ENCODE measurements at regions of chr17 and their contacts with region 1.

Region 1: GRCh38 chr17:17445925-17446665 is 30.7 kb upstream of the MED9 start:
- DNase-seq: peak; percentile 78 to 87 (median 85)
- ATAC-seq: peak; percentile 73 to 86 (median 82)
- H3K4me3 ChIP-seq: no peak overlapping the region
- H3K27ac ChIP-seq: peak overlapping the region; percentile 80 to 97 (median 91)
- H3K4me1 ChIP-seq: peaks cover 0 to 42% (median 19%) of the 10 kb centered on the region in 4 donors
- H3K27me3 ChIP-seq: no peaks in the 10 kb centered on the region
- CTCF ChIP-seq: no peak
- POLR2A ChIP-seq: no peak

Region 2: GRCh38 chr17:17258998-17259397 is 187.1 kb before region 1 on chr17:
- intact Hi-C with region 1: no loop called
- DNase-seq: peak in 1 of 3 donors; percentile 25
- ATAC-seq: no peak
- H3K4me3 ChIP-seq: no peak overlapping the region
- H3K27ac ChIP-seq: no peak overlapping the region
- H3K4me1 ChIP-seq: no peaks in the 10 kb centered on the region
- H3K27me3 ChIP-seq: no peaks in the 10 kb centered on the region
- CTCF ChIP-seq: no peak
- POLR2A ChIP-seq: no peak

Region 3: GRCh38 chr17:17408236-17408794 is 37.8 kb before region 1 on chr17:
- intact Hi-C with region 1: loop called in 1 of 2 experiments (anchors 5 kb)
- DNase-seq: peak in 1 of 3 donors; percentile 48
- ATAC-seq: peak in 3 of 4 donors; percentile 31 to 60 (median 58)
- H3K4me3 ChIP-seq: no peak overlapping the region
- H3K27ac ChIP-seq: peak overlapping the region; percentile 37 to 80 (median 73)
- H3K4me1 ChIP-seq: peaks cover 0 to 33% (median 5%) of the 10 kb centered on the region in 4 donors
- H3K27me3 ChIP-seq: no peaks in the 10 kb centered on the region
- CTCF ChIP-seq: no peak
- POLR2A ChIP-seq: no peak

Measured in right lobe of liver (tissue), 6 donors.